Activated naive CD4-positive, alpha-beta T cell treated with anti-CD3 and anti-CD28 coated beads for 36 hours (primary cell): ENCODE measurements at regions of chr7 and their contacts with region 1.

Region 1: GRCh38 chr7:2863461-2864066 is 19.5 kb upstream of the GNA12 start:
- DNase-seq: peak; percentile 90
- H3K4me3 Mint-ChIP-seq: peak overlapping the region; percentile 72
- H3K27ac Mint-ChIP-seq: peak overlapping the region; percentile 94
- H3K4me1 Mint-ChIP-seq: peaks cover 21% of the 10 kb centered on the region
- H3K27me3 Mint-ChIP-seq: no peaks in the 10 kb centered on the region

Region 2: DNA sequence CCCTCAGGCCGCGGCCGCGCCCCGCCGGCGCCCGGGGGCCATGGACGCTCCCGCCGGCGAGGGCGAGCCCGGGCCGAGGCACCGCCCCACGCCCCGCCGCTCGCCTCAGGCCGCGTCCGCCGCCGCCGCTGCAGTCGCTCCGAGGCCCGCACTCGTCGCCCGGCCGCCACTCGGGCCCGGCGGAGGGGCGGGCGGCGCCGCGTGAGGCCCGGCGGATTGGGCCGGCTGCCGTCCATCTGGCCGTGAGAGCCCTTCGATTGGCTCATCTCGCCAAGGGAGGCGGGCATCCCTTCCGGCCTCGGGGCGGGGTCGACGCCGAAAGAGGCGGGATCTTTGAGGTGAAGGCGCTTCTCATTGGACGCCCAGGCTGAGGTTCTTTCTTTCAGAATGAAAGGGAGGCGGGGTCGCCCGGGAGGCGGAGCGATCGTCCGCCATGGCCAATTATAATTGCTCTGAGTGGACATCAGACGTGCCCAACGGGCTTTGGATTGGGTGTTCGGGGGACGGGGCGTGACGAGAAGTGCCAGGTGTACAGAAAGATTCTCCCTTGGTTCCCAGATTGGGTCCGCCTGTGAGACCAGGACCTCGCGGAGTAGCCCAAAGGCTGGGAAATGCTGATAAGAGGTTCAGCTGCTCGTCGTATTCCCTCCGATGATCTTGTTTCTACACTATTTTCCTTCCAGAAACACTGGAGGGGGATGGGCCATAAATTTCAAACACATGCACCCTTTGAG is 19.2 kb before region 1 on chr7 and contains the start of gene GNA12:
- CTCF ChIA-PET with region 1: interaction called, 7 read pairs
- intact Hi-C with region 1: loop called (anchors 2 kb)
- DNase-seq: peak; percentile 99
- H3K4me3 Mint-ChIP-seq: peak within 1 kb of the TSS; percentile 79
- H3K27ac Mint-ChIP-seq: peak within 1 kb of the TSS; percentile 70
- H3K4me1 Mint-ChIP-seq: peaks cover 33% of the 10 kb centered on the region
- H3K27me3 Mint-ChIP-seq: no peaks in the 10 kb centered on the region
- total RNA-seq, gene GNA12: 14.1 to 15.0 TPM

Region 3: DNA sequence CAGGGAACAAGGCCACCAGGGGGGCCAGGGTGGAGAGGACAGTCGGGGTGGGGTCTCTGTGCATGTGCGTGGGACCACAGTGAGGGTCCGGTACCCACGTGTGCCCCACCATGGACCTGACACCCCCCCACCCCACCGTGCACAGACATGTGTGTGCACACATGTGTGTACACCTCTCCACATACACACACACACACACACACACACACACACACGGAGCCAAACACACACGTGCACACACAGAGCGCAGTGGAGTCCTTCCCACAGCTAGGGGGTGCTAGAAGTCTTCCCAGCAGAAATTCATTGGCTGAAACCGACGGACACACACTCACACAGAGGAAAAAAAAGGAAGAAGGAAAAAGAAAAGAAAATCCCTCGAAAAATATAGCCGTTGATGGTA is 23.3 kb after region 1 on chr7:
- CTCF ChIA-PET with region 1: interaction called, 12 read pairs
- intact Hi-C with region 1: no loop called
- DNase-seq: peak; percentile 78
- H3K4me3 Mint-ChIP-seq: no peak overlapping the region
- H3K27ac Mint-ChIP-seq: no peak overlapping the region
- H3K4me1 Mint-ChIP-seq: peaks cover 3% of the 10 kb centered on the region
- H3K27me3 Mint-ChIP-seq: no peaks in the 10 kb centered on the region

Region 4: GRCh38 chr7:3154912-3155494 is 291.4 kb after region 1 on chr7:
- CTCF ChIA-PET with region 1: interaction called, 32 read pairs
- intact Hi-C with region 1: loop called (anchors 1 kb)
- DNase-seq: peak; percentile 82
- H3K4me3 Mint-ChIP-seq: no peak overlapping the region
- H3K27ac Mint-ChIP-seq: no peak overlapping the region
- H3K4me1 Mint-ChIP-seq: peaks cover 20% of the 10 kb centered on the region
- H3K27me3 Mint-ChIP-seq: no peaks in the 10 kb centered on the region

Region 5: DNA sequence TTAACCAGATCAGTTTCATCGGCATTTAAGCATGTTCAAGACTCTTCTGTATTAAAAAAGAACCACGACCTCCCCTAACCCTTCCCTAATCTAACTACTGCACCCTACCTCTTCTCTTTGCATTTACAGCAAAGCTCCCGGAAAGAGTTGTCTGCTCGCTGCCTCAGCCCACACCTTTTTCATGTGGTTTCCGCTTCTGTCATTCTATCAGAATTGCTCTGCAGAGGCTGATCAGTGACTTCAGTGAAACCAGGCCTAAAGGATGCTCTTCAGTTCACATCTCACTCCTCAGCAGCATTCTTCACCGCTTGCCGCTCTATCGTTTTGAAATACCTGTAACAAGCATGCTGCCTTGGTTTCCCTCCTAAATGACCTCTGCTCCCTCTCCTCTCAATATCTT is 598.4 kb after region 1 on chr7:
- CTCF ChIA-PET with region 1: no interaction called
- intact Hi-C with region 1: loop called (anchors 10 kb)
- DNase-seq: peak; percentile 90
- H3K4me3 Mint-ChIP-seq: peak overlapping the region; percentile 66
- H3K27ac Mint-ChIP-seq: peak overlapping the region; percentile 90
- H3K4me1 Mint-ChIP-seq: peaks cover 54% of the 10 kb centered on the region
- H3K27me3 Mint-ChIP-seq: no peaks in the 10 kb centered on the region

Region 6: DNA sequence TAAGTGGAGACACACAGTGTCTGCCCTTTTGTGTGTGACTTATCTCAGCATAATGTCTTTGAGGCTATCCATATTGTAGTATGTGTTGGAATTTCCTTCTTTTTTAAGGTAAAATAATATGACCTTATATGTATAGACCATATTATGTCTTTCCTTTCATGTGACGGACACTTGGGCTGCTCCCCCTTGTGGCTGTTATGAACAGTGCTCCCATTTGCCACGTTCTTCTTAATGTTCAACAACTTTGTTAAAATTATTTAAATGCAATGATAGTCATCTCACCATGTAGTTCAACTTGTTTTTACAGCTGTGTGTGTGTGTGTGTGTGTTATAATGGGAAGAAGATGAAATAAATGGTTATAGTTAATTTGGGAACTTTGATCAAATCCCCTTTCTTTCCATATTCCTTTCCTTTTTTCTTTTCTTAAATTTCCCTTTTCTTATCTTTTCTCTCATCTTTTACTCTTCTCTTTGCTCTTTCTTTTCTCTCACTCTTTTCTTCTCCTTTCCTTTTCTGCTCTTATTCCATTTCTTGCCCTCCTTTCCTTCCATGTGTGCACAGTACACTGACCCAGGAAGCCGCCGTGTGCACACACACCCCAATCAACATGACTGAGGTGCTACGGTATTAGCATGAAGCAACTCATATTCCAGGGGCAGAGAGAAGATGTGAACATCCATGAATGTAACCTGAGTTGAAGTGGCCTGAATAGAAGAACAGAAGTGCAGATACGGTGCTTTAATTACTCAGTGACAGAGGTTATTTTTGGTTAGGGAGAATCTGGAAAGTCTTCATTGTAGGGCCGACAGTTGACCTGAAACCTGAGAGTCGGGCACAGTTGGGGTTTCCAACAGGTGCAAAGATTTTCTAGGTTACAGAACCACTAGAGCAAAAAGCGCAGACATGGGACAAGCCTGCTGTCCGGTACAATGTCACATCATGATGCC is 1034.1 kb after region 1 on chr7:
- CTCF ChIA-PET with region 1: no interaction called
- intact Hi-C with region 1: loop called (anchors 2 kb)
- DNase-seq: peak; percentile 67
- H3K4me3 Mint-ChIP-seq: no peak overlapping the region
- H3K27ac Mint-ChIP-seq: no peak overlapping the region
- H3K4me1 Mint-ChIP-seq: no peaks in the 10 kb centered on the region
- H3K27me3 Mint-ChIP-seq: no peaks in the 10 kb centered on the region